Ovary (tissue), 10 donors: ENCODE measurements at regions of chr20 and their contacts with region 1.

Region 1: GRCh38 chr20:20083807-20084206 is 31.5 kb downstream of the CFAP61 start:
- DNase-seq: no peak
- H3K4me3 ChIP-seq: no peak overlapping the region
- H3K27ac ChIP-seq: no peak overlapping the region
- H3K4me1 ChIP-seq: no peaks in the 10 kb centered on the region
- H3K27me3 ChIP-seq: no peaks in the 10 kb centered on the region
- CTCF ChIP-seq: peak in 1 of 3 donors; percentile 10
- EP300 ChIP-seq: no peak
- POLR2A ChIP-seq: no peak

Region 2: GRCh38 chr20:20225325-20226043 is 141.7 kb after region 1 on chr20:
- intact Hi-C with region 1: no loop called
- DNase-seq: no peak
- H3K4me3 ChIP-seq: no peak overlapping the region
- H3K27ac ChIP-seq: no peak overlapping the region
- H3K4me1 ChIP-seq: no peaks in the 10 kb centered on the region
- H3K27me3 ChIP-seq: no peaks in the 10 kb centered on the region
- CTCF ChIP-seq: no peak
- EP300 ChIP-seq: no peak
- POLR2A ChIP-seq: no peak

Region 3: DNA sequence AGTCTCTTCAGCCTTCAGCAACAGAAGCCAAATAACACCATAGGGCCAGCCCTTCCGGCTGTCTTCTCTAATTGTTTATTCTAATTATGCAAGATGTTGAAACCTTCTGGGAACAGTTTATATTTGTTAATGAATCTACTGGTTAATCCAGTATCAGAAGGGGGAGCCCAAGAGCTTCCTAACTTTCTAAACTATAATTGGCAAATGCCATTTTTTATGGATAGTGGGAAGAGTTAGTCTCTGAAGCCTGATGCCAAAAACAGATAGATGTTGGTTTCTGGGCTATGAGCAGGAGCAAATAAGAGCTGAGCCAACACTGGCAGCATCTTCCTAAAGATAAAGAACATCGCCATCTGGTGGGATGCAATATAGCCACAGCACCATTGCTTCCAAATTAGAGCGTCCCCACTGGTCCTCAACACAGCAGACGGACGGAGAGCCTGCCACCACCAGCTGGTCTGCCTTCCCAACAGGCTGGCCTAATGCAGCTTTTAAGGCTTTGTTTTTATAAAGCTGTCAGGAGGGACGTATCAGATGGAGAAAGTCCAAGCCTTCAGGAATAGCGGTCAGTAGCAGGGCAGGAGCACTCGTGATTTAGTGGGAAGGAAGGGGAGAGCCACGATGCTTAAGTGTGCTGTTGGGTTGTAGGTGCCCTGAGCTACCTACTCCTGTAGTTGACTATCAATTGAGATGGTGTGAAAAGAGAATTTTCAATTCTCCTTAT is 509.8 kb after region 1 on chr20:
- intact Hi-C with region 1: loop called in 2 of 4 experiments (anchors 10 kb)
- DNase-seq: peak; percentile 30 to 46 (median 38)
- H3K4me3 ChIP-seq: no peak overlapping the region
- H3K27ac ChIP-seq: no peak overlapping the region
- H3K4me1 ChIP-seq: peaks cover 5% of the 10 kb centered on the region
- H3K27me3 ChIP-seq: no peaks in the 10 kb centered on the region
- CTCF ChIP-seq: peak in 2 of 3 donors; percentile 17 to 46
- EP300 ChIP-seq: no peak
- POLR2A ChIP-seq: no peak

Region 4: GRCh38 chr20:20814685-20815084 is 730.9 kb after region 1 on chr20:
- intact Hi-C with region 1: loop called in 1 of 4 experiments (anchors 10 kb)
- DNase-seq: no peak
- H3K4me3 ChIP-seq: no peak overlapping the region
- H3K27ac ChIP-seq: no peak overlapping the region
- H3K4me1 ChIP-seq: peaks cover 2% of the 10 kb centered on the region
- H3K27me3 ChIP-seq: no peaks in the 10 kb centered on the region
- CTCF ChIP-seq: no peak
- EP300 ChIP-seq: no peak
- POLR2A ChIP-seq: no peak